HEK293 (cell line): ENCODE measurements at regions of chr9 and their contacts with region 1.

Region 1: GRCh38 chr9:72856972-72857623 is 95.8 kb downstream of the ALDH1A1 start:
- H3K4me3 ChIP-seq: no peak overlapping the region
- H3K27ac ChIP-seq: no peak overlapping the region
- H3K4me1 ChIP-seq: no peaks in the 10 kb centered on the region
- CTCF ChIP-seq: no peak

Region 2: GRCh38 chr9:72843520-72844439 is 13.3 kb before region 1 on chr9:
- CTCF ChIA-PET with region 1: interaction called, 17 read pairs
- POLR2A ChIA-PET with region 1: no interaction called
- H3K4me3 ChIP-seq: no peak overlapping the region
- H3K27ac ChIP-seq: no peak overlapping the region
- H3K4me1 ChIP-seq: no peaks in the 10 kb centered on the region
- CTCF ChIP-seq: no peak

Region 3: DNA sequence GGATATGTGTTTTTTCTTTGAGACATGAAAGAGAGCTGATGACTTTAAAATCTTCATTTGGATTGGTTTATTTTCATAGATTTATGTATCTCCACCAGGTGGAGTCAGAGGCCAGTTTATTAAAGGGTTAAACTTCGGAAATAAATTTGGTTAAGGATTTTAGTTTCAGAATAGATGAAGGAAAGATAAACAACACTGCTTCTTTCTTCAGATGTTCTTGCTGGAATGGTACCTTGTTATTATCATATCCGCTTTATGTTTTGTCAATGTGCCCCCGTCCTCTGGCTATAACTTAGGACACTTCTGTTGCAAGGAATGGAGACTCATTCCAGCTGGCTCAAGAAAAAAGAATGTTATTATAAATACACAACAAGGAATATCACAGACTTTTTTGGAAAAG is 14.6 kb after region 1 on chr9:
- CTCF ChIA-PET with region 1: interaction called, 24 read pairs
- POLR2A ChIA-PET with region 1: interaction called, 3 read pairs
- H3K4me3 ChIP-seq: no peak overlapping the region
- H3K27ac ChIP-seq: no peak overlapping the region
- H3K4me1 ChIP-seq: no peaks in the 10 kb centered on the region
- CTCF ChIP-seq: no peak

Region 4: GRCh38 chr9:73093740-73094379 is 236.8 kb after region 1 on chr9:
- CTCF ChIA-PET with region 1: interaction called, 11 read pairs
- POLR2A ChIA-PET with region 1: no interaction called
- H3K4me3 ChIP-seq: no peak overlapping the region
- H3K27ac ChIP-seq: no peak overlapping the region
- H3K4me1 ChIP-seq: no peaks in the 10 kb centered on the region
- CTCF ChIP-seq: no peak

Region 5: DNA sequence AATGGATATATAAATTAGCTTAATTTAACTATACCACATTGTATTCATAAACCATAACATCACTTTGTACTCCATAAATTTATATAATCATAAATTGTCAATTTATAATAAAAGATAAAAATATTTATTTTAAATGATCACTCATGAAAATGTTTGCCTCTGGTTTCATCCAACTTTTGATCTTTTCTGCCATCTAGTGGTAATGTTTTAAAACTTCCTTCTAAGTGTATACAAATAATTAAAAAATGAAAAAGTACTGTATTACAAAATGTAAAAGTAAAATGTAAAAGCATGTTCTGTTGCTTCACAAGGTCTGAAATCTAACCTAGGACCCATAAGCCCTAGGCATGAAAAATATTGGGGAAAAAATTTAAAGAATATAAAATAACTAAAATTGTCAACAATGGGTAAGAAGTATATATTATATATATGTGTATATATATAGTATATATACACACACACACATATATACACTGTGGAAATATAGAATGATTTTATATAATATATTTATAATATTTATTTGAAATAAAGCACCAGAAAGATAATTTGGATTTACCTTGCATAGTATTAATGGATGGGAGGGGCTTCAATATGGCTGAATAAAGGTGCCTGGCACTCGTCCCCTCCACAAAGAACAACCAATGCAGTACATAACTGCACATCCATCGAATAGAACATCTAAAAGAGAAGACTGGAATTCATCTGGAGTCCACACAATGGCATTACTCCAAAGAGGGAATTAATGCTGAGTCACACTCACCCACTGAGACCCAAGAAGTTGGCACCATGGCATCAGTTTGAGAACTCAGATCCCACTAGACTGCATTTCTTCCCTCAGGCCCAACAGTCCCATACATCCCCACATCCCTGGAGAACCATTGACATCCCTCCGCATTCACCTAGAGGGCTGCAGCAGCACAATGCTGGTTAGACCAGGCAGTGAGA is 327.1 kb after region 1 on chr9:
- CTCF ChIA-PET with region 1: interaction called, 15 read pairs
- POLR2A ChIA-PET with region 1: no interaction called
- H3K4me3 ChIP-seq: no peak overlapping the region
- H3K27ac ChIP-seq: no peak overlapping the region
- H3K4me1 ChIP-seq: no peaks in the 10 kb centered on the region
- CTCF ChIP-seq: no peak